ENCODE measurements at regions of chr15 and their contacts with region 1.

Region 1: GRCh38 chr15:32994810-32995424 is 199.6 kb downstream of the FMN1 start:
- DNase-seq: no peak
- ATAC-seq: peak; percentile 57; the same call in 2 of the 3 replicates
- H3K4me3 ChIP-seq: no peak overlapping the region
- H3K27ac ChIP-seq: no peak overlapping the region
- H3K4me1 ChIP-seq: no peaks in the 10 kb centered on the region
- H3K27me3 ChIP-seq: peaks cover 0 to 3% of the 10 kb centered on the region in 2 experiments; a peak in 1 of 4 replicates
- CTCF ChIP-seq: peak; percentile 32 to 64 (median 47); a peak in 4 of 6 replicates
- EP300 ChIP-seq: no peak
- POLR2A ChIP-seq: no peak
- RAD21 ChIP-seq: peak; percentile 60

Region 2: GRCh38 chr15:32651229-32651837 is 343.6 kb before region 1 on chr15:
- CTCF ChIA-PET with region 1: interaction called, 11 read pairs
- POLR2A ChIA-PET with region 1: no interaction called
- RAD21 ChIA-PET with region 1: interaction called, 3 read pairs
- SMC1A ChIA-PET with region 1: interaction called, 5 read pairs
- in situ Hi-C with region 1: no loop called
- intact Hi-C with region 1: no loop called
- DNase-seq: no peak
- ATAC-seq: peak; percentile 99
- H3K4me3 ChIP-seq: no peak overlapping the region
- H3K27ac ChIP-seq: no peak overlapping the region
- H3K4me1 ChIP-seq: no peaks in the 10 kb centered on the region
- H3K27me3 ChIP-seq: no peaks in the 10 kb centered on the region
- CTCF ChIP-seq: peak; percentile 90 to 94 (median 90)
- EP300 ChIP-seq: no peak
- POLR2A ChIP-seq: no peak
- RAD21 ChIP-seq: peak; percentile 65